Activated T-helper 2 cell treated with anti-CD3 and anti-CD28 coated beads, Interferon-gamma antibody, Interleukin-2, Interleukin-4, amounts not matched to agents 10 μg/mL and 5 μg/mL and 100 μg/mL, durations not matched to agents 14 hours and 24 hours and 36 hours (primary cell): ENCODE measurements at regions of chr6 and their contacts with region 1.

Region 1: GRCh38 chr6:31197559-31198305 is 27.2 kb upstream of the POU5F1 start:
- DNase-seq: peak; percentile 95
- H3K4me3 Mint-ChIP-seq: peak overlapping the region; percentile 96
- H3K27ac Mint-ChIP-seq: peak overlapping the region; percentile 99
- H3K4me1 Mint-ChIP-seq: peaks cover 20% of the 10 kb centered on the region
- H3K27me3 Mint-ChIP-seq: no peaks in the 10 kb centered on the region

Region 2: DNA sequence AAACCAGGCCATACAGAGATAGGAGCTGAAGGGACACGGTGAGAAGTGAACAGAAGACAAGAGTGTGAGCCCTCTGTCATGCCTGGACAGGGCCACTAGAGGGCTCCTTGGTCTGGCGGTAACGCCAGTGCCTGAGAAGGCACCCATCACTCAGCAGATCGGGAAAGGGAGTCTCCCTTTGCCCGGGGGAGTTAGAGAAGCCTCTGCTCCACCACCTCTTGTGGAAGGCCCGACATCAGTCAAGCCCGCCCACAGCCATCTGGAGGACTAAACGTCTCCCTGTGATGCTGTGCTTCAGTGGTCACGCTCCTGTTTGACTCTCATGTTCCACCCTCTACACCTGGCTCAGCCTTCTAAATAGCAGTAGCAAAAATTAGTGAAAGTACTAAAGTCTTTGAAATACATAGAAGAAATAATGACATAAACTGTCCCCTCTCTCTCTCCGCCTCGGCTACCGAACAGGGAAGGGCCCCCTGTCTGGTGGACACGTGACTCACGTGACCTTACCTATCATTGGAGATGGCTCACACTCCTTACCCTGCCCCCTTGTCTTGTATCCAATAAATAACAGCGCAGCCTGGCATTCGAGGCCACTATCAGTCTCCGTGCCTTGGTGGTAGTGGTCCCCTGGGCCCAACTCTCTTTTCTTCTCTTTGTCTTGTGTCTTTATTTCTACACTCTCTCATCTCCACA is 786.1 kb before region 1 on chr6:
- intact Hi-C with region 1: no loop called
- DNase-seq: peak; percentile 44
- H3K4me3 Mint-ChIP-seq: no peak overlapping the region
- H3K27ac Mint-ChIP-seq: no peak overlapping the region
- H3K4me1 Mint-ChIP-seq: peaks cover 6% of the 10 kb centered on the region
- H3K27me3 Mint-ChIP-seq: peaks cover 65% of the 10 kb centered on the region

Region 3: DNA sequence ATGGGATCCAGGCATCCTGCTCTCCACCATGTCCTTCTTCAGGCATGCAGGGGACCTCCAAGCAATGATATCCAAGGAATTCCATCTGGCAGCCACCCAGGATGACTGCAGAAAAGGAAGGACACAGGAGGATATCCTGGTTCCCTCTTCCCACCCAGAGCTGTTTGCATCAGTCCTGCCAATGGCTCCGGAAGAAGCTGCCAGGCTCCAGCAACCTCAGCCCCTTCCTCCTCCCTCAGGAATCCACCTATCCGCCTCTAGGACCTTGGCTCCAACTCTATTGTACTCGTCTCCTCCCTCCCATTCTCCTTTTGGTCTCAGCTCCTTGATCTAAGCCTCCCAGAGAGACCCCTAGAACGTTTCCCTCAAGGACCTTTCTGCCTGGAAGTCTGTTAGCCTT is 58.1 kb before region 1 on chr6:
- intact Hi-C with region 1: loop called (anchors 1 kb)
- DNase-seq: no peak
- H3K4me3 Mint-ChIP-seq: no peak overlapping the region
- H3K27ac Mint-ChIP-seq: no peak overlapping the region
- H3K4me1 Mint-ChIP-seq: peaks cover 3% of the 10 kb centered on the region
- H3K27me3 Mint-ChIP-seq: peaks cover 2% of the 10 kb centered on the region

Region 4: GRCh38 chr6:31158140-31158862 is 39.4 kb before region 1 on chr6 and contains the start of gene TCF19:
- intact Hi-C with region 1: loop called (anchors 2 kb)
- DNase-seq: peak; percentile 99
- H3K4me3 Mint-ChIP-seq: peak within 1 kb of the TSS; percentile 92
- H3K27ac Mint-ChIP-seq: peak within 1 kb of the TSS; percentile 87
- H3K4me1 Mint-ChIP-seq: peaks cover 32% of the 10 kb centered on the region
- H3K27me3 Mint-ChIP-seq: no peaks in the 10 kb centered on the region
- total RNA-seq, gene TCF19: 81.5 and 82.0 TPM in 2 replicates

Region 5: GRCh38 chr6:31271641-31272357 is 74.1 kb after region 1 on chr6 and contains the start of gene HLA-C:
- intact Hi-C with region 1: loop called (anchors 1 kb)
- DNase-seq: peak; percentile 88
- H3K4me3 Mint-ChIP-seq: peak within 1 kb of the TSS; percentile 94
- H3K27ac Mint-ChIP-seq: peak within 1 kb of the TSS; percentile 98
- H3K4me1 Mint-ChIP-seq: peaks cover 34% of the 10 kb centered on the region
- H3K27me3 Mint-ChIP-seq: peaks cover 10% of the 10 kb centered on the region
- total RNA-seq, gene HLA-C: 895 and 906 TPM in 2 replicates

Region 6: DNA sequence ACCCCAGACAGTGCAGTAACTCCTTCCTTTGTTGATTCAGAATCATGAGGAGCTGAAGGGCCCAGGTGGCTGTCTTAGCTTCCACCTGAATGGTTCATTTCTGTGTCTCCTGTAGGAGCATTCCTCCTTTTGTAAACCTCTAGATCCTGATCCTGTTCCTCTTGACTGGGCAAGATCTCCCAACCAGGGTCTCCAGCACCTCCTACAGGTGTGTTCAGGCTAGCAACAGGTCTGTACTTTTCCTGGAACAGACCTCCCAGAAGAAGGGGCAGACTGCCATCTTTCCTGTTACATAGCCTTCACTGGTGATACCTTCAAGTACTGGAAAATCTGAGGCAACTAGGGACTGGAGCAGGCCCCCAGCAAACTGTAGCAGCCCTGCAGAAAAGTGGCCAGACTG is 124.1 kb after region 1 on chr6:
- intact Hi-C with region 1: no loop called
- DNase-seq: no peak
- H3K4me3 Mint-ChIP-seq: no peak overlapping the region
- H3K27ac Mint-ChIP-seq: no peak overlapping the region
- H3K4me1 Mint-ChIP-seq: no peaks in the 10 kb centered on the region
- H3K27me3 Mint-ChIP-seq: peaks cover 53% of the 10 kb centered on the region

Region 7: DNA sequence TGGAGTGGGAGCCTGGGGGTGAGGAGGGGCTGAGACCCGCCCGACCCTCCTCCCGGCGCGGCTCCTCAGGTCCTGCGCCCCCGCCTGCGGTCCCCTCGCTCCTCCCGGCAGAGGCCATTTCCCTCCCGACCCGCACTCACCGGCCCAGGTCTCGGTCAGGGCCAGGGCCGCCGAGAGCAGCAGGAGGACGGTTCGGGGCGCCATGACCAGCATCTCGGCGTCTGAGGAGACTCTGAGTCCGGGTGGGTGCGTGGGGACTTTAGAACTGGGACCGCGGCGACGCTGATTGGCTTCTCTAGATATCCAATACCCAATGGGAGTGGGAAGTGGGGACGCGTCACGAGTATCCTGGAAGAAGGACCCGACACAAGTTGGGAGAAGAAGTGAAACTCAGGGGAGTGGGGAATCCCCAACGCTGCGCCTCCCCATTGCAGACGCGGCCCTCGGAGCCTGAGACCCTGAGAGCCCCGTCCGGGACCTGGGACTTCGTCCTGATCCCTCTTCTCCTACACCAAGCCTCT is 159.3 kb after region 1 on chr6 and contains the start of gene HLA-B:
- intact Hi-C with region 1: loop called (anchors 1 kb)
- DNase-seq: peak; percentile 55
- H3K4me3 Mint-ChIP-seq: peak within 1 kb of the TSS; percentile 93
- H3K27ac Mint-ChIP-seq: peak within 1 kb of the TSS; percentile 96
- H3K4me1 Mint-ChIP-seq: peaks cover 45% of the 10 kb centered on the region
- H3K27me3 Mint-ChIP-seq: peaks cover 15% of the 10 kb centered on the region
- total RNA-seq, gene HLA-B: 3,580 and 3,693 TPM in 2 replicates

Region 8: DNA sequence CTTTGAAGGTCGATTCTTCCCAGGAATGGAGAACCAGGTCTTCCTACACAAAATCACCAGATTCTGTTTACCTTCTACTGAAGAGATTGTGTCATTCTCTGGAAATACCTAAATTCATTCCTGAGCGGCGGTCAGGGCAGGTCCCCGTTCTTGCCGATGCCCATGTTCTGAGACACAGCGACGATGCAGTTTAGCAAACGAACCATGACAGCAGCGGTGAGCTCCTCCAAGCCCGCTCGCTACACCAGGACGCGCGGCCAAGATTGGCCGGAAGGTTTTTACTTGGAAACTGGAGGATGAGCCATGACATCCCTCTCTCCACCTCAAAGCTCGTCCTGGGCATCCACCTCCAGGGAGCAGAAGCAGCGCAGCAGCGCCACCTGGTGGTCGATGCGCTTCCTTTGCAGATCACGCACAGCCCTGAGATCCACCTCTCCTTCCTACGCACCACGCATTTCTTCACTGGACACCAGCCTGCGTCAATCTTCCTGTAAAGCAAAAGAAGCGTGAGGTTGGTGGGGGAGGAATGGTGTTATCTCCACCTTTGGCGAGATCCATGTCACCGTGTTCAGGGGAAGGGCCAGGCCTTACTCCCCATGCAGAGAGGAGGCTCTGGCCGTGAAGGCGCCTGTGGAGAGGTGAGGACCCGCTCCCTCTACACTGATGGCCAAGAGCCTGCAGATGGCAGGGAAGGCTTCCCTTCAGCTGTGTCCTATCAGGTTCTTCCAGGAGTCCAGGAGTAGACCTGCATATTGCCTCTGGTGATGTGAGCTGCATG is 169.2 kb after region 1 on chr6:
- intact Hi-C with region 1: loop called (anchors 1 kb)
- DNase-seq: peak; percentile 80
- H3K4me3 Mint-ChIP-seq: peak overlapping the region; percentile 49
- H3K27ac Mint-ChIP-seq: no peak overlapping the region
- H3K4me1 Mint-ChIP-seq: peaks cover 13% of the 10 kb centered on the region
- H3K27me3 Mint-ChIP-seq: peaks cover 70% of the 10 kb centered on the region